GM12878 (cell line): ENCODE measurements at regions of chr18 and their contacts with region 1.

Region 1: DNA sequence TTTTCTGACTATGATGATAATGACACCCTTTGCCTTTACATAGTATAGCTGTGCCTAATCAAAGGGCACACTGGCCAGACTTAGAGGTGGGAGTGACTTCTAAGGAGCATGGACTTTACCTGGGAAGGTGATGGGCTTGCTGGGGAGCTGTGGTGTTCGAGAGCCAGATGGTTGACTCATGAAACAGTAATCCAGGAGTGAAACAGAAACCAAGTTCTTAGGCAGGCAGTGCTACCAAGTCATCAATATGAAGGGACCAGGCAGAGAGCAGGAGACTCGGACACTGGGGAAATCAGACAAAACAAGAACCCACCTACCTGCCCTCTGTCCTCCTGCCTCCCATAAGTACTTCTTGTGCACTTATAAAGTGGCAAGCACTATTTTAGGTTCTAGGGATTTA is 430.4 kb downstream of the DLGAP1 start:
- DNase-seq: no peak
- ATAC-seq: peak; percentile 36; the same call in 1 of the 3 replicates
- H3K4me3 ChIP-seq: no peak overlapping the region
- H3K27ac ChIP-seq: no peak overlapping the region
- H3K4me1 ChIP-seq: no peaks in the 10 kb centered on the region
- H3K27me3 ChIP-seq: no peaks in the 10 kb centered on the region
- CTCF ChIP-seq: no peak
- EP300 ChIP-seq: no peak
- POLR2A ChIP-seq: no peak
- RAD21 ChIP-seq: no peak

Region 2: GRCh38 chr18:3447895-3448837 is 576.5 kb before region 1 on chr18:
- CTCF ChIA-PET with region 1: no interaction called
- POLR2A ChIA-PET with region 1: no interaction called
- RAD21 ChIA-PET with region 1: no interaction called
- SMC1A ChIA-PET with region 1: no interaction called
- in situ Hi-C with region 1: no loop called
- intact Hi-C with region 1: no loop called
- DNase-seq: peak; percentile 19
- ATAC-seq: peak; percentile 76
- H3K4me3 ChIP-seq: peak overlapping the region; percentile 82
- H3K27ac ChIP-seq: peak overlapping the region; percentile 73
- H3K4me1 ChIP-seq: peaks cover 19% of the 10 kb centered on the region
- H3K27me3 ChIP-seq: peaks cover 2 to 21% of the 10 kb centered on the region in 2 experiments
- CTCF ChIP-seq: 0 out of 6 replicates have a peak, but pooled peaks of 1 of the 3 experiments have one; percentile 14
- EP300 ChIP-seq: no peak
- POLR2A ChIP-seq: peak; percentile 71; the same call in 1 of the 2 replicates
- RAD21 ChIP-seq: peak; percentile 34; the same call in 1 of the 2 replicates

Region 3: DNA sequence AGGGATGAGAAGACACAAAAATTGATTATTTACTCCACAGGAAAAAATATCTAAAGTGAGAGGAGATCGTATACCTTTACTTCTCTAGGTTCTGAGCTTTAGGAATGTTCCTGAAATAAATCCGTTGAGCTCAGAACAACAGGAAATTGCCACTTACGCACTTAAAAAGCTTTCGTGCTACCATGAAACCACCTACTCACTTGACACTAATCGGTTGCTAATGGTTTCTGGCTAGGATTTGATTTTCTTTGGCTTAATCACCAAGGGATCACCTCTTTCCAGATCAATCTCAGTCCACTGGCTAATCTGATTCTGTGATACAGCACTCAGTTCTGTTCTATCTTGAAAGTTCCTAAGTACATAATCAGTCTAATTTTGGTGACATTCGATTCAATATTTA is 10.8 kb after region 1 on chr18:
- CTCF ChIA-PET with region 1: interaction called, 7 read pairs
- POLR2A ChIA-PET with region 1: no interaction called
- RAD21 ChIA-PET with region 1: interaction called, 5 read pairs
- SMC1A ChIA-PET with region 1: interaction called, 10 read pairs
- in situ Hi-C with region 1: no loop called
- intact Hi-C with region 1: no loop called
- DNase-seq: no peak
- ATAC-seq: no peak
- H3K4me3 ChIP-seq: no peak overlapping the region
- H3K27ac ChIP-seq: no peak overlapping the region
- H3K4me1 ChIP-seq: no peaks in the 10 kb centered on the region
- H3K27me3 ChIP-seq: no peaks in the 10 kb centered on the region
- CTCF ChIP-seq: no peak
- EP300 ChIP-seq: no peak
- POLR2A ChIP-seq: no peak
- RAD21 ChIP-seq: no peak

Region 4: DNA sequence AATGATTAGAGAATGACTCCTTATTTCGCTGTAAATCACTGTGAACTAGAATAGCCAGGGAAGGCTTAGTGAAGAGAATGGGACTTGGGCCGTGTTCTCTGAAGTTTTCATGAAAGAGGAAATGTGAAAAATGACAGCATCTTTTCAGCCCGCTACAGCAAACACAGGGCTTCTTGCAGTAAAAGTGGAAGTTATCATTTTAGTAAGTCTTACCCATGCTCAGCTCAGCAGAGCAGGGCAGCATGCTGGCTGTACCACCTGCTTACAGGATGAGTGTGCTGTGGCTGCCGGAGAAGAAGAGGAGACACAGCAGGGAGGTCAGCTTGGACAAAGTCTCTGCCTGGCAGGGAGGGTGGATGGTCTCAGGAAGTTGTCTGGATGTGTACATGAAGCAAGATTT is 731.1 kb after region 1 on chr18:
- CTCF ChIA-PET with region 1: no interaction called
- POLR2A ChIA-PET with region 1: no interaction called
- RAD21 ChIA-PET with region 1: no interaction called
- SMC1A ChIA-PET with region 1: no interaction called
- in situ Hi-C with region 1: no loop called
- intact Hi-C with region 1: no loop called
- DNase-seq: peak; percentile 71
- ATAC-seq: peak; percentile 92
- H3K4me3 ChIP-seq: no peak overlapping the region
- H3K27ac ChIP-seq: no peak overlapping the region
- H3K4me1 ChIP-seq: no peaks in the 10 kb centered on the region; the same call in 1 of the 2 replicates
- H3K27me3 ChIP-seq: no peaks in the 10 kb centered on the region
- CTCF ChIP-seq: no peak
- EP300 ChIP-seq: peak in 1 of 2 experiments; percentile 59; a peak in 1 of 4 replicates
- POLR2A ChIP-seq: no peak
- RAD21 ChIP-seq: no peak